ENCODE measurements at regions of chr1 and their contacts with region 1.

Region 1: DNA sequence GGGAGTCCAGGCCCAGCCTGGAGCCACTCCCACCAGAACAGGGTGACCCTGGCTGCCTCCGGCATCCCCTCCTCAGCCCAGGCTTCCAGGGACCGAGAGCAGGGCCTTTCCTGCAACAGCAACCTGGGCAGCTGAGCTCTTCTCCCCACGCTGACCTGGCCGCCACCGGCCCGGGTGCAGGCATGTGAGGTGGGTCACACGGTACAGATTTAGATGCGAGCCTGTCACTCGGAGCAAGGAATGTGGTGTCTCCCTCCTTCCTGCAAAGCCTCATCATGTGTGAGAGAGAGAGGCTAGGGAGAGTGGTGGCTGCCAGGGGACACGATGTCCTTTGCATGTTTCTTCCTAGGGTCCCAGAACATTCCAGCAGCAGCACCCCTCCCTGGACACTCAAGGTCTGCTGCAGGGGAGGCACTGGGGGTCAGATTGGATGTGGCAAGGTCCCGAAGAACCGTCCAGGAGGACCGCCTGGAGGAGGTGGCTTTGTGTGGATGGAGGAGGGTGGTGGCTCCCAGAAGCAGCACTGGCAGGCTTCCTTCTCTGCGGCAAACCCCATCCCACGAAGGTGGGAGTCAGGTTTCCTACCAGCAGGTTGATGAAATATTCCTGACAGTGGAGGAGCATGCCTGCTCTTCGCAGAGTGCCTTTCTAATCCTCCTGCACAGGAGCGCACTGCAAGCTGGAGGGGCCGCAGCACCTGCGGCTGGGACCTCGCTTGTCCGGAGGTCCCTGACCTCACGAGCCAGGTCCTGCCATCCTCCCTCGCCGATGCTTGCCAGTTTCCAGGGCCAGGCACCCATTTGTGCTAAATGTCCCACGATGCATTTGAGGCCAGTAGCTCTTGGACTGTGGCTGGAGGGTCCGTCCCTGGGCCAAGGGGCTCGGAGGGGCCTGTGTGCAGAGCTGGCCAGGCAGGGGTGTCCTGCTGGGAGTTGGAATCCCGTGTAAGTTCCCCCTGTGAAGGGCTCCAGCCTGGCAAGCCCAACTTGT is 68.4 kb downstream of the PRDM16 start:
- DNase-seq: no peak
- ATAC-seq: no peak
- H3K4me3 Mint-ChIP-seq: no peak overlapping the region
- H3K27ac Mint-ChIP-seq: no peak overlapping the region; the same call in 1 of the 2 replicates
- H3K4me1 Mint-ChIP-seq: no peaks in the 10 kb centered on the region
- H3K27me3 Mint-ChIP-seq: no peaks in the 10 kb centered on the region
- CTCF ChIP-seq: no peak

Region 2: DNA sequence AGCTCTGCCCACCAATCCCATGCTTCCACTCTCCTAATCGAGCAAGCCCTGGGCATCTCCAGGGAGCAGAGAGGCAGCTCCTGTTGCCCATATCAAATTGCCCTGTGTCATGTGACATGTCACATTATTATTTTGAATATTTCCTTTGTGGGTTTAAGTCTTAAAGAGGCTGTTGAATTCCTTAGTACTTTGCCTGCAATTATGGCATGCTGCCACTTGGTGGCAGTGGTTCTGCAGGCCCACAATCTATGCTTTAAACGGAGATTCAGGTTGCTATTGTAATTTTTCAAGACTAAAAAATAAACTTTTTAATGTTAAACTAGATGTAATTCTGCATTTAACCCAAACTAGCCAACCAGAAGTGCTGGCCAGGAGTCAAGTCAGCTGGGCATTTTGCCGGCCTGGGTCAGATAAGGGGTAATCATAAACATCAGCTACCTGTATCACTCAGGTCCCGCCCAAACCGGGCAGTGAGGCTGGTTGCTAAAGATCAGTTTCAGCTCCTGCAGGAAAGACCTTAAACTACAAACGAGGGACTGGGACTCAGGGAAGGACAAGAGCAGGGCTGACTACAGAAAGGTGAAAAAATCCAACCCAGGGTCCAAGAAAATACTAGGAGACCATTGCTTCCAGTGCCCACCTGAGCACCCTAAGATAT is 279.8 kb after region 1 on chr1:
- CTCF ChIA-PET with region 1: no interaction called
- POLR2A ChIA-PET with region 1: interaction called, 12 read pairs
- DNase-seq: no peak
- ATAC-seq: no peak
- H3K4me3 Mint-ChIP-seq: no peak overlapping the region
- H3K27ac Mint-ChIP-seq: no peak overlapping the region
- H3K4me1 Mint-ChIP-seq: no peaks in the 10 kb centered on the region
- H3K27me3 Mint-ChIP-seq: peaks cover 7% of the 10 kb centered on the region; the same call in 1 of the 2 replicates
- CTCF ChIP-seq: peak; percentile 60

Measured in WTC11 (cell line).